SK-N-SH (cell line): ENCODE measurements at regions of chr11 and their contacts with region 1.

Region 1: DNA sequence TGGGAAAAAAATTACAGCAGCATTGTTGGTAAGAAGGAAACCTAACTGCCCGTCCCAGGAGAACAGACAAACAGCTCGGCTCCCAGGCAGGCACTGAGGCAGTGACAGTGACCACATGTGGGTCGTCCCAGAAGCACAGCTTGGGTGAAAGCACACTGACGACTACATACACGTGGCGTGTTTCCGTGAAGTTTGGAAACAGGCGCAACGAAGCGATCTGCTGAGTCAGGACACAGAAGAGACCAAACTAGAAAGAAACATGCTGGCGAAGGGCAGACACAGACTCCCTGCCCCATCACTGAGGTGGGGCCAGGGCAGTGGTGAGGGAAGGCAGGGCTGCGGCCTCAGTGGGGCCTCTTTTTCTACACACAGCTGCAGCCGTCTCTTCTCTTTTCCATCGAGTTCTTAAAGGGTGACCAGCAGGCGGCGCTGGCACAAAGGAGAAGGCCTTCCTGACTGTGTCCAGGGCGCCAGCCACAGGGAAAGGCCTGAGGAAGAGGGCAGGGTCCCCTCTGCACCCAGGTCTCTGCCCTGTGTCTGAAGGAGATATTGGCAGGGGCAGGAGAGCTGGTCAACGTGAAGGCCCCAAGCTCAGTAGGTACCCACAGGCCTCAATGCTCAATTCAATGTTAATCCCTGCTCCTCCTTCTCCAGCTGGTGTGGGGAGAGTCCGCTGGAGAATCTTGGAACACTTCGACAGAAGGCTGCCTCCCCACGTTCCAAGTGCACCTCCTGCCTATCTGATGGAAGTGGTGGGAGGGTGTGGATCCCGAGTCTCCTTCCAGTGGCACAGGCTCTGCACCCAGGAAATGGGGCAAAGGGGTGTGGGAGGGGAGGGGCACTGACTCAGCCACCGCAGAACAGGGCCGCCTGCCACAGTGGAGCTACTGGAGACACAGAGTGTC is 19.9 kb downstream of the CARS1 start:
- DNase-seq: peak; percentile 83
- H3K4me3 ChIP-seq: no peak overlapping the region; a peak in 1 of 4 replicates
- H3K27ac ChIP-seq: no peak overlapping the region
- H3K4me1 ChIP-seq: no peaks in the 10 kb centered on the region; a peak in 1 of 4 replicates
- H3K27me3 ChIP-seq: no peaks in the 10 kb centered on the region
- CTCF ChIP-seq: peak; percentile 83
- EP300 ChIP-seq: no peak
- RAD21 ChIP-seq: peak; percentile 86

Region 2: DNA sequence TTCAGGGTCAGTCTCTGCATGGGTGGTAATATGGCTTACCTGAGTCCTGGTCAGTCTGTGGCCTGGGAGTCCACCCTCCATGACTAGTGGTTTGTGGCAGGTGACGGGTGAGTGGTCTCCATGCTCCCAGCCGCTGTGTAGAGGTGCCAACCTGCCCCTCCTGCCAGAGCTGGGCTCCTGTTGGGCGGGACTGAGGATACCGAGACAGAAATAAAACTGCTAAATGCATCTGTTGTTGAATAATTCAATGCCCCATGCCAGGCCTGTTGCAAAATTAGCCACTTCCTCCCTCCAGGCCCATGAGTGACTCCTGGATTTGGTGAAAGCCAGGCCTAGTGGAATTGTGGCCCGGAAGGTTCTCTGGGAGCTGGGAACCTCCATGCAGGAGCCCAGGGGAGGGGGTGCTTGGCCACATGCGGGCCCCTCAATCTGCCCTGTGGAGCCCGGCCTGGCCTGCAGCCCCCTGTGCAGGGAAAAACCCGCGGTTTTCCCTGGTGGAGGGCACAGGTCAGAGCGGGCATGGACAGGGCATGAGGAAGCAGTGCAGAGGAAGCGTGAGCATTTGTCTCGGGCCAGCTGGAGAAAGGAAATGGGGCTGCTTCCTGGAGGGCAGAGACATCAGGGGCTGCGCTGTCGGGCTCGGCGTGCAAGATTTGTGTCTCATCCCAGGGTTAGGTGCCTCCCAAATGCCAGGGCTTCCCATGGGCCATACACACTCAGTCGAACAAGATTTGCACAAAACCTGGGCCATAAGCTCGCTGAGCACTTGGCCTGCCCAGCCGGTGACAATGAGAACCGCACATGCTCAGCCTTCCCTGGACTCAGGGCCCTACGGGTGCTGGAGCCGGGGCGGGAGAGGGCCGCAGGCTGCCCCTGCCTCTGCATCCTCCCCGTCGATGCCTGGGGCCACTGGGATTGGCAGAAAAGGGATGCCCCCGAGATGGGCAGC is 525.6 kb before region 1 on chr11:
- CTCF ChIA-PET with region 1: no interaction called
- POLR2A ChIA-PET with region 1: no interaction called
- DNase-seq: peak; percentile 34
- H3K4me3 ChIP-seq: no peak overlapping the region
- H3K27ac ChIP-seq: no peak overlapping the region
- H3K4me1 ChIP-seq: peaks cover 0 to 9% of the 10 kb centered on the region in 2 experiments; a peak in 1 of 4 replicates
- H3K27me3 ChIP-seq: no peaks in the 10 kb centered on the region
- CTCF ChIP-seq: no peak
- EP300 ChIP-seq: no peak
- RAD21 ChIP-seq: no peak

Region 3: GRCh38 chr11:2655834-2656622 is 381.3 kb before region 1 on chr11:
- CTCF ChIA-PET with region 1: no interaction called
- POLR2A ChIA-PET with region 1: no interaction called
- DNase-seq: no peak
- H3K4me3 ChIP-seq: no peak overlapping the region
- H3K27ac ChIP-seq: no peak overlapping the region
- H3K4me1 ChIP-seq: peaks cover 0 to 32% of the 10 kb centered on the region in 2 experiments; a peak in 1 of 4 replicates
- H3K27me3 ChIP-seq: no peaks in the 10 kb centered on the region
- CTCF ChIP-seq: no peak
- EP300 ChIP-seq: no peak
- RAD21 ChIP-seq: no peak

Region 4: GRCh38 chr11:2825889-2826678 is 211.2 kb before region 1 on chr11:
- CTCF ChIA-PET with region 1: no interaction called
- POLR2A ChIA-PET with region 1: no interaction called
- DNase-seq: peak; percentile 38
- H3K4me3 ChIP-seq: no peak overlapping the region
- H3K27ac ChIP-seq: no peak overlapping the region; a peak in 1 of 4 replicates
- H3K4me1 ChIP-seq: peaks cover 0 to 9% of the 10 kb centered on the region in 2 experiments; a peak in 1 of 4 replicates
- H3K27me3 ChIP-seq: no peaks in the 10 kb centered on the region
- CTCF ChIP-seq: no peak
- EP300 ChIP-seq: no peak
- RAD21 ChIP-seq: no peak

Region 5: DNA sequence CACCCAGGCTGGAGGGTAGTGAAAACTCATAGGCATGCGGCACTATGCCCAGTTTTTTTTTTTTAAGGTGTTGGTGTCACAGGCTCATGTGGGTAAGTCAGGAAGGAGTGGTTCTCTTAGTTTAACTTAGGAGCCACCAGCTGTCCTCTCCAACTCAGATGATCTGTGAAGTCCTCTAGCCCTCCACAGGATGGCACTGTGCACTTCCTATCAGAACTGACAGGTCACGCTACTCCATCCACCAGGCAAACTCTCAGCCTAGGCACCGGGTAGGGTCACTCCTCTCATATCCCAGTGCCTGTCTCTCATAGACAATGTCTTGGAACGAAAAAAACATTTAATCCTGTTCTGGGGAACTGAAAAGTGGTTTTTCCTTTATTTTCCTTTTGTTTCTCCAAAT is 61.7 kb before region 1 on chr11:
- CTCF ChIA-PET with region 1: interaction called, 10 read pairs
- POLR2A ChIA-PET with region 1: no interaction called
- DNase-seq: peak; percentile 44
- H3K4me3 ChIP-seq: no peak overlapping the region
- H3K27ac ChIP-seq: no peak overlapping the region
- H3K4me1 ChIP-seq: no peaks in the 10 kb centered on the region
- H3K27me3 ChIP-seq: no peaks in the 10 kb centered on the region
- CTCF ChIP-seq: peak; percentile 53
- EP300 ChIP-seq: no peak
- RAD21 ChIP-seq: peak; percentile 70

Region 6: GRCh38 chr11:3049430-3050243 is 12.3 kb after region 1 on chr11:
- CTCF ChIA-PET with region 1: interaction called, 85 read pairs
- POLR2A ChIA-PET with region 1: interaction called, 3 read pairs
- DNase-seq: peak; percentile 39
- H3K4me3 ChIP-seq: peak overlapping the region in 1 of 2 experiments; percentile 21; a peak in 1 of 4 replicates
- H3K27ac ChIP-seq: peak overlapping the region; percentile 79
- H3K4me1 ChIP-seq: peaks cover 18 to 52% of the 10 kb centered on the region in 2 experiments
- H3K27me3 ChIP-seq: no peaks in the 10 kb centered on the region
- CTCF ChIP-seq: peak; percentile 42
- EP300 ChIP-seq: no peak; a peak in 1 of 4 replicates
- RAD21 ChIP-seq: no peak; the same call in 1 of the 2 replicates

Region 7: DNA sequence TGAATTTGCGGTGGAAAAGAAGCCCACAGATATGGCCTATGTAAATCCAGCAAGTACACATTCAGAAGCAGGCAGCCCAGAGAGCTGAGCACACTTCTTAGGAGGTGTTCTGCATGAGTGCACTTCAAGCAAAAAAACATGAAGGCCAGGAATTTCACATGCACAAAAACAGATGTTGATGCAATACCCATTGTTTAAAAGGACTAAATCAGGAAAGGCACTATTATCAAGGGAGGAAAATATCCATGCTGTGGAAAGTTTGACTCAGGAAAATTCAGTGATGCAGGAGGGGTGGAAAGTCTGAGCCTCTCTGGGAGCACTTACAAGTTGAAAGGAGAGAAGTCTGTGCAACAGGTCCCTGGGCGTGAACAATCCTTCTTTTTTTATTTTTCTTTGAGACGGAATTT is 35.7 kb after region 1 on chr11:
- CTCF ChIA-PET with region 1: interaction called, 11 read pairs
- POLR2A ChIA-PET with region 1: no interaction called
- DNase-seq: no peak
- H3K4me3 ChIP-seq: no peak overlapping the region
- H3K27ac ChIP-seq: no peak overlapping the region
- H3K4me1 ChIP-seq: peaks cover 0 to 9% of the 10 kb centered on the region in 2 experiments; a peak in 1 of 4 replicates
- H3K27me3 ChIP-seq: no peaks in the 10 kb centered on the region
- CTCF ChIP-seq: no peak
- EP300 ChIP-seq: no peak
- RAD21 ChIP-seq: no peak

Region 8: GRCh38 chr11:3222941-3223915 is 185.9 kb after region 1 on chr11:
- CTCF ChIA-PET with region 1: interaction called, 48 read pairs
- POLR2A ChIA-PET with region 1: no interaction called
- DNase-seq: peak; percentile 23
- H3K4me3 ChIP-seq: no peak overlapping the region
- H3K27ac ChIP-seq: no peak overlapping the region
- H3K4me1 ChIP-seq: no peaks in the 10 kb centered on the region; a peak in 1 of 4 replicates
- H3K27me3 ChIP-seq: no peaks in the 10 kb centered on the region
- CTCF ChIP-seq: no peak
- EP300 ChIP-seq: no peak
- RAD21 ChIP-seq: no peak